Endothelial cell of umbilical vein (primary cell): ENCODE measurements at regions of chr7 and their contacts with region 1.

Region 1: GRCh38 chr7:24572997-24573625 is at the start of gene PALS2:
- DNase-seq: peak; percentile 74
- H3K4me3 ChIP-seq: peak within 1 kb of the TSS; percentile 73 to 92 (median 82)
- H3K27ac ChIP-seq: peak within 1 kb of the TSS; percentile 61
- H3K4me1 ChIP-seq: peaks cover 17% of the 10 kb centered on the region
- H3K27me3 ChIP-seq: peaks cover 25 to 30% of the 10 kb centered on the region in 2 experiments
- CTCF ChIP-seq: no peak
- POLR2A ChIP-seq: no peak
- total RNA-seq, gene PALS2: 23.6 and 24.4 TPM in 2 replicates

Region 2: DNA sequence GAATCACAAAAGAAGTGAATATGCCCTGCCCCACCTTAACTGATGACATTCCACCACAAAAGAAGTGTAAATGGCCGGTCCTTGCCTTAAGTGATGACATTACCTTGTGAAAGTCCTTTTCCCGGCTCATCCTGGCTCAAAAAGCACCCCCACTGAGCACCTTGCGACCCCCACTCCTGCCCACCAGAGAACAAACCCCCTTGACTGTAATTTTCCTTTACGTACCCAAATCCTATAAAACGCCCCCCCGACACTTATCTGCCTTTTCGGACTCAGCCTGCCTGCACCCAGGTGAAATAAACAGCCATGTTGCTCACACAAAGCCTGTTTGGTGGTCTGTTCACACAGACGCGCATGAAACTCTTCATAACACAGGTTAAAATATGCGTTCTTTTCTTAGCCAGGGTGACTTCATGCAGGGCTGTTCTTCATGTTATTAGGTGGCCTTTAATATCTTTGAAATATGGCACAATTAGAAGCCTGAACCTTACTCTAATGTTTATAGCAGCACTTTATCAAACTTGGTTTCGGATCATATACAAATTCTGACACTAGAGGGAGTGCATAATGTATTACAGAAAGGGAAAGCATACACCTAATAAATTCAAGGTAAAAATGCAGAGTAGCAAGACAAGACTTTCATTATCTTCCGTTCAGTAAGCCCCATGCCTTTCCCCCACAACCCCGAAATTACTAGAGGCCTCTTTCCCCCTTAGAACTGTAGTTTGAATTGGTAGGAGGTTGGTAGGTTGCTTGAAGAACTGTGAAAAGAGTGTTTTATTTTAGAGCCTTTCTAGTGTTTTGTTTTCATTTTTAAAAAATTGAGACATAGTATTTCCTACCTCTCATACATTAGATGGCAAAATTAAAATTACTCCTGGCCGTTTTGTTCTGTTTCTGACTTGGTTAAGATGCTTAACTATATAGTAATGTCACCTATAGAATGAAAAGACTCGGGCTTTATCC is 171.2 kb before region 1 on chr7:
- CTCF ChIA-PET with region 1: interaction called, 3 read pairs
- POLR2A ChIA-PET with region 1: no interaction called
- dilution Hi-C with region 1: no loop called
- intact Hi-C with region 1: loop called (anchors 5 kb)
- DNase-seq: peak; percentile 51
- H3K4me3 ChIP-seq: no peak overlapping the region
- H3K27ac ChIP-seq: no peak overlapping the region
- H3K4me1 ChIP-seq: no peaks in the 10 kb centered on the region
- H3K27me3 ChIP-seq: no peaks in the 10 kb centered on the region
- CTCF ChIP-seq: peak; percentile 9 to 37
- POLR2A ChIP-seq: no peak

Region 3: GRCh38 chr7:24715661-24716479 is 142.8 kb after region 1 on chr7:
- CTCF ChIA-PET with region 1: interaction called, 11 read pairs
- POLR2A ChIA-PET with region 1: no interaction called
- dilution Hi-C with region 1: no loop called
- intact Hi-C with region 1: no loop called
- DNase-seq: peak; percentile 28
- H3K4me3 ChIP-seq: no peak overlapping the region
- H3K27ac ChIP-seq: no peak overlapping the region
- H3K4me1 ChIP-seq: no peaks in the 10 kb centered on the region
- H3K27me3 ChIP-seq: no peaks in the 10 kb centered on the region
- CTCF ChIP-seq: peak; percentile 41 to 54
- POLR2A ChIP-seq: no peak

Region 4: DNA sequence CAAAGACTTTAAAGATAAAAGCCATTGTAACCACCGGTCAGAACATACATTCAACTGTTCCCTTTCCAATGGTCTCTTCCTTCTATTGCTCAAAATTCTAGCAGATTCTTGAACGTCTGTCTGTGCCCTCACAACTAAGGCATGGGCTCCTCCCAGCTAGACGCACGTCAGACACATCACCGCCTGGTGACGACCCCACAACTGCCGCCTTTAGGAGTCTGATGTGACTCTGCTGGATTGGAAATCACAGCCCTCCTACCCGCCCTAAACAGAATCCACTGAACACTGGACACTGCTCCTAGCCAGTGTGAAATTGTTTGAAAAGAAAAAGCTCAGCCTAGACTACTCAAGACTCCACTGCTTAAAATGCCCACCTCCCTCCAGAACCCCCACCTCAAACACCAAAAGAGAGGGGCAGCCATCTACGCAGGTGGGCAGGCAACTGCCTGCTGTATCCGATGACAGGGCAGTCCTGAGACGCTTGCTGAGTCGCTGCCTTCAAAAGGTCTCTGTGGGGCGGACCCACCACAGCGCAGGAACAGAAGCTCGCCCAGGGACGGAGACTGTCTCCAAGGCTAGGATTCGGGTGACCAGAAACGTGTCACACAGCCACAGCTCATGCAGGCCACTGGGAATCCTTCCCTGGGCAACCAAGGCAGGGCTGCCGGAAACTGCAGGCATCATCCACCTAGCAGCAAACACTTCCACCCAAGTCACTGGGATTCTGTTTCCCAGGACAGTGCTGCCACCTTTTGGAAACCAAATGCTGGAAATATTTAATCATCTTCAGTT is 149.5 kb after region 1 on chr7:
- CTCF ChIA-PET with region 1: interaction called, 19 read pairs
- POLR2A ChIA-PET with region 1: no interaction called
- dilution Hi-C with region 1: no loop called
- intact Hi-C with region 1: loop called (anchors 5 kb)
- DNase-seq: peak; percentile 36
- H3K4me3 ChIP-seq: no peak overlapping the region
- H3K27ac ChIP-seq: no peak overlapping the region
- H3K4me1 ChIP-seq: no peaks in the 10 kb centered on the region
- H3K27me3 ChIP-seq: no peaks in the 10 kb centered on the region
- CTCF ChIP-seq: peak; percentile 9 to 35
- POLR2A ChIP-seq: no peak

Region 5: DNA sequence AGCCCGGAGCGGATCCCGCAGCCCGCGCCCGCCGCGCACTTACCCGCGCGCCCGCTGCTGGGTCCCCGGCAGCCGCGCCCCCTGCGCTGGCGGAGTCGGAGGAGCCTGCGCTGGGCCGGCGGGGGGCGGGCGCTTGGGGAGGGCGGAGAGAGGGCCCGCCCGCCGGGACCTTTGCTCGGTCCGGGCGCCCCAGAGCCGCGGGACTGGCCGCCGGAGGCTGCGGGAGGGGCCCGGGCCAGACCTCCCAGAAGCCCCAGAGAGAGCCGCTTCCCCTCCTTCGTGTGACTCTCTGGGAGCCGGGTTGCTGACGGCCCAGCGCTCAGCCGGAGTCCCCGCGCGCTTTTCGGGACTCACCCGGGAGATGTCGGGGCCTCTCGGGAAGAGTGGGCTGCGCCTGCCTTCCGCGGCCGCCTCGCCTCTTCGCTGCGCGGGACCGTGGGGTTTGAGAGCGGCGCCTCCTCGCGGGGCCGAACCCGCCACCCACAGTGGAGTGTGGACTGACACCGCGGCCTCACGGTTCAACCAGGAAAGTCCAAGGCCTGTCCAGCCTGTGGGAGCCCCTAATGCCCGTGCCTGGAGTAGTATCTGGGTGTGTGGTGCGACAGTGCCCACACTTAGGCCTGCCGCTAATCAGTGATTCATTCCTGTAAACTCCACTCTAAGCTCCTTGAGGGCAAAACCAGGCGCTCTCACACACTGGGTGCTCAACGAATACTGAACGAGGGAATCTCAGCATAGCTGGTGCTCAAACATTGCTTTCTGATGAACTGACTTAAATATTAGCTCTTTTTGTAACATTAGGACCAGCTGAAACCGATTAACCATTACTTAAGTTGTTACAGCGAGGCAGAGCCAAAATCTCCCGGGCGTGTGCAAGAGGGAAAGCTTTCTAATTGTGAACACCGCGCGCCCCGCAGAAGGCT is 184.5 kb after region 1 on chr7 and contains the start of gene GSDME:
- CTCF ChIA-PET with region 1: interaction called, 4 read pairs
- POLR2A ChIA-PET with region 1: no interaction called
- dilution Hi-C with region 1: no loop called
- intact Hi-C with region 1: loop called (anchors 2 kb)
- DNase-seq: peak; percentile 62
- H3K4me3 ChIP-seq: peak within 1 kb of the TSS; percentile 55 to 77 (median 75)
- H3K27ac ChIP-seq: peak within 1 kb of the TSS; percentile 63
- H3K4me1 ChIP-seq: peaks cover 24% of the 10 kb centered on the region
- H3K27me3 ChIP-seq: peaks cover 3% of the 10 kb centered on the region in 2 experiments
- CTCF ChIP-seq: no peak
- POLR2A ChIP-seq: peak; percentile 69
- total RNA-seq, gene GSDME: 21.3 and 23.4 TPM in 2 replicates